ENCODE measurements at regions of chr17 and their contacts with region 1.

Region 1: DNA sequence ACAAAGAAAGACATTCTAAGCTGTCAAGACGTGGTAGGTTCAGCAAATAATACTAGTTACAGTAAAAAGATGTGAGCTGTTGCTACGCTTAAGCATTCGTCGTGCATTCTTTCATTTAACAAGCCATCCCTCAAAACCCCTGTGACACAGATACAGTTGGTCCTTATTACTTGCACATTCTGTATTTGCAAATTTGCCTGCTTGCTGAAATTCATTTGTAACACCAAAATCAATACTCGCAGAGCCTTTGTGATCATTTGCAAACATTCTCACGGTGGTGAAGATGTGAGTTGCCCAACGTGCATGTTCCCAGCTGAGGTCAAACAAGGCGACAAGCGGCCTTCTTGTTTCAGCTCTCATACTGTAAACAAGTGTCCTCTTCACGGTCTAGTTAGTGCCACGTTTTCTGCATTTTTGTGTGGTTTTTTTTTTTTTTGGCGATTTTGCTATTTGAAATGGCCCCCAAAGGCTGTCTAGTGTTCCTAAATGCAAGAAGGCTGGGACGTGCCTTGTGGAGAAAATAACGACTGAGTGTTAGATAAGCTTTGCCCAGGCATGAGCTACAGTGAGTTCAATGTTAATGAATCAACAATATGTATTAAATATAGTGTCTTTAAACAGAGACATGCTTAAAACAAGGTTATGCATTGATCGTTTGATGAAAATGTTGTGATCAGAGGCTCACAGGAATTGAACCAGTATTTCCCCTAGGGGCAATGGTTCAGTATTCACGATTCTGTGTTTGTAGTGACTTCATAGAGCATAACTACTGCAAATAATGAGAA is 84.1 kb downstream of the RAB11FIP4 start:
- DNase-seq: no peak
- ATAC-seq: no peak
- H3K4me3 ChIP-seq: no peak overlapping the region
- H3K27ac ChIP-seq: no peak overlapping the region
- H3K4me1 ChIP-seq: no peaks in the 10 kb centered on the region
- H3K27me3 ChIP-seq: no peaks in the 10 kb centered on the region
- CTCF ChIP-seq: no peak

Region 2: GRCh38 chr17:31195305-31195704 is 280.3 kb before region 1 on chr17:
- CTCF ChIA-PET with region 1: no interaction called
- POLR2A ChIA-PET with region 1: no interaction called
- in situ Hi-C with region 1: no loop called
- intact Hi-C with region 1: no loop called
- DNase-seq: no peak
- ATAC-seq: no peak
- H3K4me3 ChIP-seq: no peak overlapping the region
- H3K27ac ChIP-seq: no peak overlapping the region
- H3K4me1 ChIP-seq: no peaks in the 10 kb centered on the region
- H3K27me3 ChIP-seq: no peaks in the 10 kb centered on the region
- CTCF ChIP-seq: no peak

Region 3: DNA sequence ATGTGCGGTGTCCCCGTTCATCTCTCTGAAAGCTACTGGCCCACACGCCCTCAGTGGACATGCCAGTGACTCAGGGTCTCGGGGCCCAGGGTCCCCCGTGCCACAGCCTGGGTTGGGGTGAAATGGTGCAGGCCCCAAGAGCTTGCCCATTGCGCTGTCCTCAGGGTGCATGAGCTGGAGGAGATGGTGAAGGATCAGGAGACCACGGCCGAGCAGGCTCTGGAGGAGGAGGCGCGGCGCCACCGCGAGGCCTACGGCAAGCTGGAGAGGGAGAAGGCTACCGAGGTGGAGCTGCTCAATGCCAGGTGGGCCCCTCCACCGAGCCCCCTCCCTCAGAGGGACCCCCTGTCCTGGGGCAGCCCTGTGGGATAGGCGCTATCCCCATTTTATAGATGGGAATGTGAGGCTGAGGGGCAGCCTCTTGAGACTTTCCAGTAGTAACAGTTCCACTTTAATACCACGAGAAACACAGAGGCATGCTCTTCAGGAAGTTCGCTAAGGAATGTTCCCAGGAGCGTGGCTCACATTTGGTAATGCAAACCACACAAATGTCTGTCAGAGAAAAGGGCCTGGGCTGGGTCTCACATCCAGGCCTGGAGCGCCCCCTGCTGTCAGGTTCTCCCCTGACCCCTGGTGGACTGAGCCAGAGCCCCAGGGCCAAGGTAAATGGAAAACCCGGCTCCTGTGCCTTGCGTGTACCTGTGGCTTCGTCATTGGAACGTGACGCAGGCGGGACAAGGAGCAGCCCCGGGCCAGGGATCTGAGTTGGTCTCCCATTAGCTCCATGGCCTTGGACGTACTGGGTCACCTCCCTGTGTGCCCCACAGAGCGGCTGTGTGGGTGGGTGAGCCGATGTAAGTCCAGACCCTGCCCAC is 49.6 kb after region 1 on chr17:
- CTCF ChIA-PET with region 1: interaction called, 11 read pairs
- POLR2A ChIA-PET with region 1: no interaction called
- in situ Hi-C with region 1: no loop called
- intact Hi-C with region 1: no loop called
- DNase-seq: no peak
- ATAC-seq: peak; percentile 92
- H3K4me3 ChIP-seq: no peak overlapping the region
- H3K27ac ChIP-seq: no peak overlapping the region
- H3K4me1 ChIP-seq: no peaks in the 10 kb centered on the region
- H3K27me3 ChIP-seq: no peaks in the 10 kb centered on the region
- CTCF ChIP-seq: peak; percentile 94

Region 4: GRCh38 chr17:31558748-31559644 is 83.4 kb after region 1 on chr17:
- CTCF ChIA-PET with region 1: interaction called, 24 read pairs
- POLR2A ChIA-PET with region 1: no interaction called
- in situ Hi-C with region 1: no loop called
- intact Hi-C with region 1: no loop called
- DNase-seq: no peak
- ATAC-seq: peak; percentile 92
- H3K4me3 ChIP-seq: peak overlapping the region; percentile 69 to 85
- H3K27ac ChIP-seq: peak overlapping the region; percentile 88
- H3K4me1 ChIP-seq: peaks cover 30% of the 10 kb centered on the region
- H3K27me3 ChIP-seq: no peaks in the 10 kb centered on the region
- CTCF ChIP-seq: peak; percentile 98

Measured in Panc1 (cell line).